Thyroid gland (tissue), 4 donors: ENCODE measurements at regions of chr1 and their contacts with region 1.

Region 1: GRCh38 chr1:25819576-25820246 is at the start of gene MTFR1L:
- DNase-seq: peak; percentile 91
- H3K4me3 ChIP-seq: peak within 1 kb of the TSS; percentile 64 to 98 (median 97)
- H3K27ac ChIP-seq: peak within 1 kb of the TSS; percentile 81 to 93 (median 90)
- H3K4me1 ChIP-seq: peaks cover 29 to 40% of the 10 kb centered on the region in 2 donors
- H3K27me3 ChIP-seq: no peaks in the 10 kb centered on the region
- CTCF ChIP-seq: no peak
- POLR2A ChIP-seq: peak; percentile 92 to 97
- total RNA-seq, gene MTFR1L: 75.7 to 109 (median 99.2) TPM

Region 2: DNA sequence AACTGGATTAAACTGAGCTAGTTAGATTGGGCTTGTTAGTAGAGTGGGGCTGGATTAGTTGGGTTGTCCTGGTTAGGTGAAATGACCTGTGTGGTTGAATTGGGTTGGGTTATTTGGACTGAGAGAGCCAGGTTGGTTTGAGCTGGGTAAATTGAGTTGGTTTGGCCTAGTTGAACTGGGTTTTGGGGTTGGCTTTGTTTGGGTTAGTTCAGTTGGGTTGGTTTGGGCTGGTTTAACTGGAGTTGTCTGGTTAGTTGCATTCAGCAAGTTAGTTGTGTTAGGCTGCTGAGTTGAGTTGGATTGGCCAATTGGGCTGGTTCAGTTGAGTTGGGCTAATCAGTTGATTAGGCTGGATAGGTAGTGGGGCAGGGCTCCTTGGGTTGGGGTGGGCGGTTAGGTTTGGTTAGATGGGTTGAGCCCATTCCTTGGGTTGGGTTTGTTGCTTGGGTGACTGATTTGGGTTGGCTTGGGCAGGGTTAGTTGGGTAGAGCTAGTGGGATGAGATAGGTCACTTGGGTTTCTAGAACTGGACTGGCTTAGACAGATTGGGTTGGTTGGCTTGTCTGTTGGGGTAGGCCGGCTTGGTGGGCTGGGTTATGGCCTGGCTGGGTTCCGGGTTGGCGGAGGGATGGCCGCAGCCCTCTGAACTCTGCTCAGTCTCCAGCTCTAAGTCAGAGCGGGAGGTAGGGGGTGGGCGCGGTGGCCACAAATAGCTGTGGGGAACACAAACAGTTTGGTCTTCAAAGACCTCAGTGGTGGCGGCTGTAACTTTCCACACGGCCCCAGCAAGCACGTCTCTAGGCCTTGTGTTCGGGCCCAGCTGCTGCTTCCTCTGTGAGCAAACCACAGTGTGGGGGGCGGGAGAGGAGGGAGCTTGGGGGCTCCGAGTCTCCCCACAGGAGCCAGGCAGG is 822.5 kb before region 1 on chr1:
- intact Hi-C with region 1: no loop called
- DNase-seq: peak in 1 of 2 donors; percentile 7
- H3K4me3 ChIP-seq: no peak overlapping the region
- H3K27ac ChIP-seq: no peak overlapping the region
- H3K4me1 ChIP-seq: no peaks in the 10 kb centered on the region
- H3K27me3 ChIP-seq: no peaks in the 10 kb centered on the region
- CTCF ChIP-seq: no peak
- POLR2A ChIP-seq: no peak

Region 3: GRCh38 chr1:25239681-25240541 is 579.8 kb before region 1 on chr1:
- intact Hi-C with region 1: loop called (anchors 10 kb)
- DNase-seq: peak; percentile 95 to 96
- H3K4me3 ChIP-seq: peak overlapping the region in 2 of 3 donors; percentile 5 to 29
- H3K27ac ChIP-seq: peak overlapping the region; percentile 66 to 89 (median 79)
- H3K4me1 ChIP-seq: peaks cover 30 to 32% of the 10 kb centered on the region in 2 donors
- H3K27me3 ChIP-seq: no peaks in the 10 kb centered on the region
- CTCF ChIP-seq: peak; percentile 29 to 77 (median 56)
- POLR2A ChIP-seq: peak in 1 of 2 donors; percentile 69

Region 4: DNA sequence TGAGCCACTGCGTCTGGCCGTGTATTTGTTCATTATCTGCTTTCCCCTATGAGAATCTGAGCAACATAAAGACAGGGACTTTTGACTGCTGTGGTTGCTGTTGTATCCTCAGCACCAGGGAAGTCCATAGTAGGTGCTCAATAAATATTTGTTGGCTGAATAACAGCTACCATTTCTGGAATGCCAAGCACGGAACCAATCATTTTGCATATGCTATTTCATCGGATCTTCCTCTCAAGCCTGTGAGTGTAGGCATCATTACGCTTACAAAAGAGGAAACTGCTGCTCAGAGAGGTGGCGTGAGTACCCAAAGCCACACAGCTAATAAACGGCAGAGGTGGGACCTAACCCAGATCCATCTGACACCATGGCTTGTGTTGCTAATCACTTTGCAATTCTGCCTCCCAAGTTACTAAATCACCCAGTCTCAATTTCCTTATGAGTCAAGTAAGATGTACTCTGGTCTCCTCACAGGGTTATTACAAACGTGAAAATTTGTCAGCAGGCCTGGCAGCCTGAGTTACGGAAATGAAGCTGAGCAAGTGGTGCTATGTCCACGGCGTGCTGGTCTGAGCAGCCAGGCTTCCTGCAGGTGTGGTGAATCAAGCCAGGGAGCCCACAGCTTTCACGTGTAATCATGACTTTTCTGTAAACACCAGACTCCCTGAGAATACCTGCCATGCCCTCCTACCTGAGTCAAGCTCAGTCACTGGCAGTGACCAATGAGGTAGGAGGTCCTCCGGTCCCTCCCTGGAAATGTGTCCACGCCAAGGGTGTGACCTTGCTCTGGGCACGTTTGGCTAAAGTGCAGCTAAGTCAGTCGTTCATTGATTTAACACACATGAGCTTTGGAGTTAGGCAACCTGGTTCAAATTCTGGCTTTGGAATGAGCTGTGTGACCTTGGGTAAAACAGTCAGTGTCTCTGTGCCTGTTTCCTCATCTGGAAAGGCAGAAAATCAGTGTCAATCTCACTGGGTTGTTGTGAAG is 394.3 kb before region 1 on chr1:
- intact Hi-C with region 1: loop called (anchors 10 kb)
- DNase-seq: no peak
- H3K4me3 ChIP-seq: no peak overlapping the region
- H3K27ac ChIP-seq: no peak overlapping the region
- H3K4me1 ChIP-seq: peaks cover 0 to 5% of the 10 kb centered on the region in 2 donors
- H3K27me3 ChIP-seq: no peaks in the 10 kb centered on the region
- CTCF ChIP-seq: no peak
- POLR2A ChIP-seq: no peak